Activated naive CD4-positive, alpha-beta T cell treated with anti-CD3 and anti-CD28 coated beads, Interleukin-2, amount 10 ng/mL, durations not matched to agents 7 days and 5 days (primary cell): ENCODE measurements at regions of chr19 and their contacts with region 1.

Region 1: DNA sequence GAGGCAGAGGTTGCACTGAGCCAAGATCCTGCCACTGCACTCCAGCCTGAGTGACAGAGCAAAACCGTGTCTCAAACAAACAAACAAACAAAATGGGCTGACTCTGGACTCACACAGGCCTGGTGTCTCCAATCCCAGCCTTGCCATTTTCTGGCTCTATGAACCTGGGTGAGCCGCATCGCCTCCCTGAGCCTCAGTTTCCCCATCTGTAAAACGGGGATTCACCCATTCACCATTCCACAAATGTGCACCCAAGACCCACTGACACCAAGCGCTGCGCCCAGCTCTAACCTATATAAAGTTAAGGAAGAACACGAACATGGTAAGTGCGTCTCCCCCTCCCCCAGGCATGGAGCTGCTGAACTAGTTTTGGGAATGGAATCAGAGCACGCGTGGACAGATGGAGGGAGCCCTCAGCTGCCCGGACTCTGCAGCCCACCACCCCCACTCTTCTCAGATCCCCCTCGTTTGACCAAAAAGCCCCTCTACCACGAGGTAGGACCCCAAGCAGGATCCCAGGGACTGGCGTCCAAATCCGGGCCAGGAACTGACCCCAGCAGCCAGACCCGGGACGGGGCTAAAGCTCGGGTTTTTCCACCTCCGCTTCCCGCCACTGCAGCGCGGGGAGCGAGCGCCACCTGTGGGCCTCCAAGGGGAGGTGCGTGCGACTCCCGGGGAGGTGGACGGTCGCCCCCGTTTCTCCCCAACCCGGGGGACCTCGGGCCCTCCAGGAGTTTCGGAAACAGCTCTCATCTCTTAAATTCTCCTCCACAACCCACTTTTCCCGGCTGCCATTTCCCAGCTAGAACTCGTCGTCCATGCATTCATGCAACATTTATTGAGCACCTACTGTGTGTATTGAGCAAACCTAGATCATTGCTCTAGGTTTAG is 33.0 kb upstream of the ADGRE5 start:
- DNase-seq: peak; percentile 75
- H3K4me3 Mint-ChIP-seq: peak overlapping the region; percentile 6
- H3K27ac Mint-ChIP-seq: peak overlapping the region; percentile 24
- H3K4me1 Mint-ChIP-seq: peaks cover 34% of the 10 kb centered on the region
- H3K27me3 Mint-ChIP-seq: peaks cover 26% of the 10 kb centered on the region

Region 2: GRCh38 chr19:14198384-14199376 is 149.6 kb before region 1 on chr19:
- CTCF ChIA-PET with region 1: interaction called, 82 read pairs
- DNase-seq: no peak
- H3K4me3 Mint-ChIP-seq: no peak overlapping the region
- H3K27ac Mint-ChIP-seq: peak overlapping the region; percentile 24
- H3K4me1 Mint-ChIP-seq: peaks cover 14% of the 10 kb centered on the region
- H3K27me3 Mint-ChIP-seq: peaks cover 33% of the 10 kb centered on the region

Region 3: DNA sequence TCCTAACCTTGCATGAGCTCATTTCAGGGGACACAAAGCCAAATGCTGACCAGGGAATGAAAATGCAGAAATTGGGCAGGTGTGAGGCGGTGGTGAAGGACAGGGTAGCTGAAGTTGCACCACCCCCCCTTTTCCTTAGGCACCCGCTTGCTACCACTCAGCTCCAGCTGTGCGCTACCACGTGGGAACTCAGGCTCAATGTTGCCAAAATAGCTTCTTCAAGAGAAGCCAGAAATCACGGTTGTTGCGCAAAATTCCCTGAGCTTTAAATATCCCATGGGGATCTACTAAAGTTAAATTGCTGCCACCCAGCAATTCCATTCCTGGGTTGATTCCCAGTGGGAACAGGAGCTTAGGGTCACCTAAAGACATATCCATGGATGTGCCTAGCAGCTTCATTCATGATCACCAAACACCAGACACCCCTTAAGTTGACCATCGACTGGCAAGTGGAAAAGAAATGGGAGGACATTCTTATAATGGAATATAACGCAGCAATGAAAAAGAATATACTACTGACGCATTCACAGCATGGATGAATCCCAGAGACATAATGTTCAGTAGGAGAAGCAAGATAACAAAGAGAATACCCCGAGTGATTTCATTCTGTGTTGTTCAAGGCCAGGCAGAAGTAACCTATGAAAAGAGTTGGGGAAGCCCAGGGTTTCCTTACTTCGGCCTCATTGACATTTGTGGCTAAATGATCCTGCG is 129.5 kb before region 1 on chr19:
- CTCF ChIA-PET with region 1: interaction called, 13 read pairs
- DNase-seq: no peak
- H3K4me3 Mint-ChIP-seq: no peak overlapping the region
- H3K27ac Mint-ChIP-seq: no peak overlapping the region
- H3K4me1 Mint-ChIP-seq: peaks cover 18% of the 10 kb centered on the region
- H3K27me3 Mint-ChIP-seq: peaks cover 31% of the 10 kb centered on the region

Region 4: GRCh38 chr19:14337510-14337909 is 10.7 kb before region 1 on chr19:
- CTCF ChIA-PET with region 1: interaction called, 25 read pairs
- DNase-seq: peak; percentile 47
- H3K4me3 Mint-ChIP-seq: no peak overlapping the region
- H3K27ac Mint-ChIP-seq: no peak overlapping the region
- H3K4me1 Mint-ChIP-seq: peaks cover 17% of the 10 kb centered on the region
- H3K27me3 Mint-ChIP-seq: peaks cover 11% of the 10 kb centered on the region